GM10248 (cell line): ENCODE measurements at regions of chr2 and their contacts with region 1.

Region 1: GRCh38 chr2:102240640-102241370 is 54.0 kb downstream of the IL1RL2 start:
- DNase-seq: peak; percentile 87
- CTCF ChIP-seq: peak; percentile 97

Region 2: GRCh38 chr2:101998896-101999789 is 241.7 kb before region 1 on chr2:
- CTCF ChIA-PET with region 1: interaction called, 82 read pairs
- POLR2A ChIA-PET with region 1: no interaction called
- DNase-seq: no peak
- CTCF ChIP-seq: peak; percentile 6

Region 3: GRCh38 chr2:102020596-102021181 is 220.1 kb before region 1 on chr2:
- CTCF ChIA-PET with region 1: interaction called, 78 read pairs
- POLR2A ChIA-PET with region 1: interaction called, 9 read pairs
- DNase-seq: peak; percentile 72
- CTCF ChIP-seq: peak; percentile 99

Region 4: GRCh38 chr2:102206666-102207341 is 34.0 kb before region 1 on chr2:
- CTCF ChIA-PET with region 1: interaction called, 13 read pairs
- POLR2A ChIA-PET with region 1: no interaction called
- DNase-seq: no peak
- CTCF ChIP-seq: no peak

Region 5: GRCh38 chr2:102262216-102263129 is 21.7 kb after region 1 on chr2:
- CTCF ChIA-PET with region 1: interaction called, 133 read pairs
- POLR2A ChIA-PET with region 1: no interaction called
- DNase-seq: no peak
- CTCF ChIP-seq: no peak

Region 6: GRCh38 chr2:102442967-102443828 is 202.4 kb after region 1 on chr2:
- CTCF ChIA-PET with region 1: interaction called, 49 read pairs
- POLR2A ChIA-PET with region 1: no interaction called
- DNase-seq: peak; percentile 41
- CTCF ChIP-seq: peak; percentile 71